GM12878 (cell line): ENCODE measurements at regions of chr15 and their contacts with region 1.

Region 1: GRCh38 chr15:25790000-25790660 is 73.0 kb downstream of the ATP10A start:
- DNase-seq: no peak
- ATAC-seq: peak; percentile 27
- H3K4me3 ChIP-seq: no peak overlapping the region
- H3K27ac ChIP-seq: no peak overlapping the region
- H3K4me1 ChIP-seq: peaks cover 12% of the 10 kb centered on the region
- H3K27me3 ChIP-seq: no peaks in the 10 kb centered on the region
- CTCF ChIP-seq: no peak
- EP300 ChIP-seq: no peak
- POLR2A ChIP-seq: no peak
- RAD21 ChIP-seq: no peak

Region 2: DNA sequence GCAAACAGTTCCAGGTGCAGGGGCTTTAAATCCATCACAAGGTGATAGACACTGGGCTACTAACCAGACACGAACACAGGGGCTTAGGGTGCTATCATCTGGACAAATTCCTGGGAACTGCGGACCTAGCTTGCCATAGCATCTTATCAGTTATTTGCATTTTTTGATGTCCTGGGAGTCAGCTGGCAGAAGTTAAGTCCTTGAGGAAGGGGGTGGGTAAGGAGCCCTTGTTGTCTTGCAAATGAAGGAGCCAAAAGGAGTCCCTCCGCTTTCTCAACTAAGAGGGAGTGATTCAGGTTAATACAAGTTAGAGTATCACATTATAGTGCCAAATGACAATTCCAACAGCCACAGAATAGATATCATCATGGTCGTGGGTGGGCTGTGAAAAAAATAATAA is 1005.6 kb before region 1 on chr15:
- CTCF ChIA-PET with region 1: no interaction called
- POLR2A ChIA-PET with region 1: no interaction called
- RAD21 ChIA-PET with region 1: no interaction called
- SMC1A ChIA-PET with region 1: no interaction called
- in situ Hi-C with region 1: no loop called
- intact Hi-C with region 1: no loop called
- DNase-seq: no peak
- ATAC-seq: no peak
- H3K4me3 ChIP-seq: no peak overlapping the region
- H3K27ac ChIP-seq: no peak overlapping the region
- H3K4me1 ChIP-seq: no peaks in the 10 kb centered on the region
- H3K27me3 ChIP-seq: no peaks in the 10 kb centered on the region
- CTCF ChIP-seq: no peak
- EP300 ChIP-seq: no peak
- POLR2A ChIP-seq: no peak
- RAD21 ChIP-seq: no peak

Region 3: GRCh38 chr15:25811481-25811906 is 21.4 kb after region 1 on chr15:
- CTCF ChIA-PET with region 1: no interaction called
- POLR2A ChIA-PET with region 1: no interaction called
- RAD21 ChIA-PET with region 1: no interaction called
- SMC1A ChIA-PET with region 1: interaction called, 3 read pairs
- in situ Hi-C with region 1: no loop called
- intact Hi-C with region 1: loop called (anchors 1 kb)
- DNase-seq: peak; percentile 37
- ATAC-seq: peak; percentile 94
- H3K4me3 ChIP-seq: no peak overlapping the region
- H3K27ac ChIP-seq: no peak overlapping the region
- H3K4me1 ChIP-seq: peaks cover 12% of the 10 kb centered on the region
- H3K27me3 ChIP-seq: no peaks in the 10 kb centered on the region
- CTCF ChIP-seq: no peak
- EP300 ChIP-seq: peak; percentile 45 to 88; a peak in 3 of 4 replicates
- POLR2A ChIP-seq: no peak
- RAD21 ChIP-seq: no peak

Region 4: DNA sequence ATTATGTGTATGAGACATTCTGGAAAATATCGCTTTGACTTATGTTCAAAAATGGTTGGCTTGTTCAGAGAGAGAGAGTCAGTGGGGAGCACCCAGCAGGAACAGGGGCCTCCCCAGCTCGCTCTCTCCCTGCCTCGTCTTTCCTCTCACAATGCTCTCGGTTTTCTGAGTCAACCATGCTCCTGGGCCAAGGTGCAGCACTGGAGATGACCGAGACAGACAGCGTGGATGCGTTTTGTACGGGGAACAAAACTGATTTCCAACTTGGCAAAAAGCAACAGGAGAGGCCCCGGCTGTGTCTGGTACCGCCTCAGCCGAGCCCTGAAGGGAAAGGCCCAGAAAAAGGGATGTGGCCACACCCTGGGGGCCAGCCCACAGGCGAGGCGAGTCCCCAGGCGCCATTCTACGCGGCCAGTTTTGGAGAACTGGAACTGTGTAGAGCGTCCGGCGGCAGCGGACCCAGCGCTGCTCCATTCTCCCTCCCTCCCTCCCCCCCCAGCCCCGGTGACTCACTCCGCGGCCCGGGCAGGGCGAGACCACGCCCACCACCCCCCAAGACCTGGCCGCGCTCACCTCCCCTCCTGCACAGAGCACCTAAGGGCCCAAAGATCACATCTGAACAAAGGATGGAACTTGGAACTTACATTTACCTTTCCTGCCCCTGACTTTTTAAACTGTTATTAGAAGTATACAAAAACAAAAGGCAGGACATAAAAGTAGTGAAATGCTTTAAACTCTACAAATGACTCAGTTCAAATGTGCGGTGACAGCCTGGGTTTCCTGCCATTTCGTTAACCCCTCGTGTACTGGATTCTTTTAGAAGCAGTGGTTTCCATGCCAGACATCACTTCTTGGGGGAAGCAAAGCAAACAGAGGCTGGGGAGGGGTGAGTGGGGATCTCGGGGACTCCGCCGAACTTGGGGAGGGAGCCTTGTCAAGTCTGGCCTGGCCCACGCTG is 60.3 kb after region 1 on chr15:
- CTCF ChIA-PET with region 1: no interaction called
- POLR2A ChIA-PET with region 1: no interaction called
- RAD21 ChIA-PET with region 1: no interaction called
- SMC1A ChIA-PET with region 1: no interaction called
- in situ Hi-C with region 1: no loop called
- intact Hi-C with region 1: loop called (anchors 5 kb)
- DNase-seq: peak; percentile 28
- ATAC-seq: peak; percentile 94
- H3K4me3 ChIP-seq: peak overlapping the region; percentile 26; the same call in 1 of the 2 replicates
- H3K27ac ChIP-seq: peak overlapping the region; percentile 21; the same call in 1 of the 2 replicates
- H3K4me1 ChIP-seq: peaks cover 19% of the 10 kb centered on the region
- H3K27me3 ChIP-seq: no peaks in the 10 kb centered on the region
- CTCF ChIP-seq: no peak
- EP300 ChIP-seq: no peak; a peak in 1 of 4 replicates
- POLR2A ChIP-seq: 0 out of 2 replicates have a peak, but pooled peaks have one; percentile 11
- RAD21 ChIP-seq: no peak